ENCODE measurements at regions of chr10 and their contacts with region 1.

Region 1: GRCh38 chr10:104406715-104407650 is 53.4 kb downstream of the CFAP58 start:
- H3K4me3 ChIP-seq: no peak overlapping the region
- H3K27ac ChIP-seq: no peak overlapping the region
- H3K4me1 ChIP-seq: no peaks in the 10 kb centered on the region
- CTCF ChIP-seq: peak; percentile 35; the same call in 1 of the 2 replicates

Region 2: GRCh38 chr10:104614245-104614831 is 207.4 kb after region 1 on chr10:
- CTCF ChIA-PET with region 1: interaction called, 51 read pairs
- POLR2A ChIA-PET with region 1: no interaction called
- H3K4me3 ChIP-seq: no peak overlapping the region
- H3K27ac ChIP-seq: no peak overlapping the region
- H3K4me1 ChIP-seq: no peaks in the 10 kb centered on the region
- CTCF ChIP-seq: no peak

Region 3: GRCh38 chr10:104622598-104623209 is 215.7 kb after region 1 on chr10:
- CTCF ChIA-PET with region 1: interaction called, 51 read pairs
- POLR2A ChIA-PET with region 1: no interaction called
- H3K4me3 ChIP-seq: no peak overlapping the region
- H3K27ac ChIP-seq: no peak overlapping the region
- H3K4me1 ChIP-seq: no peaks in the 10 kb centered on the region
- CTCF ChIP-seq: no peak